A673 (cell line): ENCODE measurements at regions of chr12 and their contacts with region 1.

Region 1: GRCh38 chr12:43444940-43445564 is 107.0 kb downstream of the ADAMTS20 start:
- DNase-seq: peak; percentile 65
- H3K4me3 ChIP-seq: no peak overlapping the region
- H3K27ac ChIP-seq: no peak overlapping the region
- H3K4me1 ChIP-seq: no peaks in the 10 kb centered on the region
- H3K27me3 ChIP-seq: no peaks in the 10 kb centered on the region
- CTCF ChIP-seq: peak; percentile 93

Region 2: GRCh38 chr12:42912367-42912766 is 532.7 kb before region 1 on chr12:
- CTCF ChIA-PET with region 1: no interaction called
- POLR2A ChIA-PET with region 1: no interaction called
- intact Hi-C with region 1: no loop called
- DNase-seq: no peak
- H3K4me3 ChIP-seq: no peak overlapping the region
- H3K27ac ChIP-seq: no peak overlapping the region
- H3K4me1 ChIP-seq: no peaks in the 10 kb centered on the region
- H3K27me3 ChIP-seq: no peaks in the 10 kb centered on the region
- CTCF ChIP-seq: no peak

Region 3: GRCh38 chr12:43728117-43728516 is 283.1 kb after region 1 on chr12:
- CTCF ChIA-PET with region 1: no interaction called
- POLR2A ChIA-PET with region 1: no interaction called
- intact Hi-C with region 1: loop called (anchors 5 kb)
- DNase-seq: peak; percentile 31
- H3K4me3 ChIP-seq: no peak overlapping the region
- H3K27ac ChIP-seq: no peak overlapping the region
- H3K4me1 ChIP-seq: no peaks in the 10 kb centered on the region
- H3K27me3 ChIP-seq: no peaks in the 10 kb centered on the region
- CTCF ChIP-seq: peak; percentile 59

Region 4: DNA sequence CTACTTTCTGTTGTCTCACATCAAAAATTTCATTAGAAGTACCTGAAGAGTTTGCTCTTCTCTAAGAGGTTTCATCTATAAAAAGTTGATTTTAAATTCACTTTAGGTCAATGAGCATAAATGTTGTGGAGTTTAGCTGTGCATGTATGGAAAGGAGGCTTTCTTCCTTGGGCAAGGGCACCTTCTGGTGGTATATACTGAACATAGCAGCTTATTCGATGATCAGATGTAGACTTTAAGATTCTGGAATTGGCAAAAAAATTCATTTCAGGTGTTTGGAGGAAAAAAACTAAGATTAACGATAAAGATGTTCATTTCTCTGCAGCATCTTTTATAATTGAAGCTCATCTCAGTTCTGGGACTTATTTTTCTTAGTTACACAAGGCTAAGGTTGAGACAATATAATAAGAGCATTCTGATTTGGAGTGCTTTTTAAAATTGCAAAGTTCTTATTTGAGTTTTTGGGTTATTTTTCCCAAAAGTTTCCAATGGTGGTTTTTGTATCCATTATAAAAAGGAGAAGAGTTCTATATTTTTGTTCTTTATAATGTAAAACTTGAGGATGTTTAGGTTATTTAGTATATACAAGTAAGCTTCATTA is 437.6 kb after region 1 on chr12:
- CTCF ChIA-PET with region 1: interaction called, 4 read pairs
- POLR2A ChIA-PET with region 1: no interaction called
- intact Hi-C with region 1: loop called (anchors 2 kb)
- DNase-seq: peak; percentile 67
- H3K4me3 ChIP-seq: no peak overlapping the region
- H3K27ac ChIP-seq: no peak overlapping the region
- H3K4me1 ChIP-seq: no peaks in the 10 kb centered on the region
- H3K27me3 ChIP-seq: no peaks in the 10 kb centered on the region
- CTCF ChIP-seq: peak; percentile 85

Region 5: GRCh38 chr12:44930972-44931600 is 1486.0 kb after region 1 on chr12:
- CTCF ChIA-PET with region 1: no interaction called
- POLR2A ChIA-PET with region 1: no interaction called
- intact Hi-C with region 1: loop called (anchors 5 kb)
- DNase-seq: peak; percentile 96
- H3K4me3 ChIP-seq: no peak overlapping the region
- H3K27ac ChIP-seq: peak overlapping the region; percentile 81
- H3K4me1 ChIP-seq: peaks cover 27% of the 10 kb centered on the region
- H3K27me3 ChIP-seq: no peaks in the 10 kb centered on the region
- CTCF ChIP-seq: peak; percentile 67